GM10248 (cell line): ENCODE measurements at regions of chr3 and their contacts with region 1.

Region 1: DNA sequence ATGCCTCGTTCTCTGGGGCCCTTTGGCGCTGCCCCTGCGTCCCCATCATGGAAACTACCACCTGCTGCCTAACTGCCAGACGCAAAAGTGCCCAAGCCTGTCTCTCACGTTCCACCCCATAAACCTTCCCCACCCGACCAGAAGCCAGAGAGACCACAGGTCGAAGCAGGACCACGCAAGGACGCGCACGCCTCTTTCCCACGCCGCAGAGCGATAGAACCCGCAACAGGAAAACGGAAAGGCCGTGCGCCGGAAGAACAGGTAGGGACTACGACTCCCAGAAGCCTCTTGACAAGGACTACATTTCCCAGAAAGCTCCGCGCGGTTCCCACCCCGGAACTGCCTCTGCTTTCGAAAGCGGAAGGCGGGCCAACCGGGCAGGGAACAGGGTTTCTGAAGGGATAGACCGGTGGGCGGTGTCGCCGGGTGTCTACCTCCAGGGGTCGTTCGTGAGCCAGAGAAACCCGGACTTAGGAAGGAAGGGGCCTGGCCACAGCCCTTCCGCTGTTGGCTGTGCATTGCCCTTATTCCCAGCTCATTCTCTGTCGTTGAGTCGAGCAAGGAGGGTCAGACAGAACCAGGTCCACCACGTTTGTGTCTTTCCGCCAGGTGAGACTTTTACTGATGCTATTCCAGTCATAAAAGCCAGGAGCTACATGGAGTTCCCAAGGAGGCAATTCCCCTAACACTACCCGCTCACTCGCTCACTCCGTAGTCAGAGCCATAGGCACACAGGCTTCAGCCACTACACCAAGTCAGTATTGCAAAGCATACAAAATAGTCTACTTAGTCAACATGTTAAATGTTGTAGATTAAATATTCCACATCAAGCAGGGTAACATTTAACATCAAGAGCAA is 56.6 kb upstream of the ZBTB38 start:
- DNase-seq: peak; percentile 98
- CTCF ChIP-seq: peak; percentile 88

Region 2: GRCh38 chr3:140378571-140379340 is 933.0 kb before region 1 on chr3:
- CTCF ChIA-PET with region 1: no interaction called
- POLR2A ChIA-PET with region 1: no interaction called
- DNase-seq: no peak
- CTCF ChIP-seq: no peak

Region 3: DNA sequence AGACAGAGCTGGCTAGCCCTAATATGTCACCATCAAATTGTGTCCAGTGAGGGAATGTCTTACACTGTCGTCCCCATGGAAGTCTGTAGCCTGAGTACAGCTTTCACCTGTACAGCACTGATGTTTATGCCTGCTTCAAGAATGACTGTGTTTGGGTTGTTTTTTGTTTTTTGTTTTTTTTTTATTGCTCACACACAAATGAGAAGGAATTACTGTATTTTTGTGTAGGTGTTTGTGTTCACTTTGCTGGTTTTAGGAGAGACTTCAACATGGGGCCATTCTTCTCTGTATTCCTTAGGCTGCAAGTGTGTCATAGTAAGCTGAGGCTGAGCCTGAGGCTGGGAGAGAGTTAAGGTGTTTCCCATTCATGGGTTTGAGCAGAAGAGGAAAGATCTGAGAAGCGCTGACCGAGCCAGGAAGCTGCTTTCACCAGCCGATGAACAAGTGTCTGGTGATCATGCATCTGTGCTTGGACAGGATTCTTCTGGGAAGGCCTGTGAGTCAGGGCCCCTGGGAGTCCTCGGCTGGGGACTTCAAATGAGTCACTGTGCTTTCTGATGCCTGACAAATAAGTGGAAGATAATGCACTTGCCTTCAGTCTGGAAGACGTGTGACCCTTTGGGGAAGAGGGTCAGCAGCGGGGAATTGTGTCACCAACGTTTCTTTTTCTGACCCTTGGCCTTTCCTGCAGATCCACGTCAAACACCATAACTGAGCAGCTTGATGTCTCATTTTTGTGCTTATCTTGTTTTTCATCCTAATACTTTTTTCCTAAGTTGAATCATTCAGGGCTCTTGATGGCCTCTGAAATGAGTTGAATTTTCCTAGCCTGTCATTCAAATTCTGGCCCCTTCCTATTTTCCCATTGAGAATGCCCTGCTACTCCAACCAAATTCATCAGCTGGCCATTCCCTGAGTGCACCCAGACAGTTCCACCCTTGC is 19.9 kb after region 1 on chr3:
- CTCF ChIA-PET with region 1: interaction called, 30 read pairs
- POLR2A ChIA-PET with region 1: no interaction called
- DNase-seq: no peak
- CTCF ChIP-seq: no peak

Region 4: DNA sequence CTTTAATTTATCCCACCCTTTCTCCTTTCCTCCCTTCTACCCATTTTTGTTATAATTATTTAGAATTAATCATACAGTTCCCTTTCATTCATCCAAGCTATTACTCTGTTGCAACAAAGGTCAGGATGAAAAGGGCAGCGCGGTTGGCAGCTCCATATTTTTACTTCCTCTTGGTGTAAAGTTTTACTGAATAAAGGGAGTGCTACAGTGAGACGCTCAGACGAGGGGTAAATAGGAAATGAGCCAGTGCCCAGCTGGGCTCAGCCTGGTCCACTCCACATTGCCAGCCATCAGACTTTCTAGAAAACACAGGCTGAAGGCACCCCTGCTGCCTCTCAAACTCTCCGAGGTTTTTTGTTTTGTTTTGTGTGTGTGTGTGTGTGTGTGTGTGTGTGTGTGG is 34.7 kb after region 1 on chr3:
- CTCF ChIA-PET with region 1: interaction called, 15 read pairs
- POLR2A ChIA-PET with region 1: no interaction called
- DNase-seq: no peak
- CTCF ChIP-seq: no peak

Region 5: GRCh38 chr3:141386611-141387111 is 74.9 kb after region 1 on chr3:
- CTCF ChIA-PET with region 1: interaction called, 14 read pairs
- POLR2A ChIA-PET with region 1: no interaction called
- DNase-seq: no peak
- CTCF ChIP-seq: no peak

Region 6: DNA sequence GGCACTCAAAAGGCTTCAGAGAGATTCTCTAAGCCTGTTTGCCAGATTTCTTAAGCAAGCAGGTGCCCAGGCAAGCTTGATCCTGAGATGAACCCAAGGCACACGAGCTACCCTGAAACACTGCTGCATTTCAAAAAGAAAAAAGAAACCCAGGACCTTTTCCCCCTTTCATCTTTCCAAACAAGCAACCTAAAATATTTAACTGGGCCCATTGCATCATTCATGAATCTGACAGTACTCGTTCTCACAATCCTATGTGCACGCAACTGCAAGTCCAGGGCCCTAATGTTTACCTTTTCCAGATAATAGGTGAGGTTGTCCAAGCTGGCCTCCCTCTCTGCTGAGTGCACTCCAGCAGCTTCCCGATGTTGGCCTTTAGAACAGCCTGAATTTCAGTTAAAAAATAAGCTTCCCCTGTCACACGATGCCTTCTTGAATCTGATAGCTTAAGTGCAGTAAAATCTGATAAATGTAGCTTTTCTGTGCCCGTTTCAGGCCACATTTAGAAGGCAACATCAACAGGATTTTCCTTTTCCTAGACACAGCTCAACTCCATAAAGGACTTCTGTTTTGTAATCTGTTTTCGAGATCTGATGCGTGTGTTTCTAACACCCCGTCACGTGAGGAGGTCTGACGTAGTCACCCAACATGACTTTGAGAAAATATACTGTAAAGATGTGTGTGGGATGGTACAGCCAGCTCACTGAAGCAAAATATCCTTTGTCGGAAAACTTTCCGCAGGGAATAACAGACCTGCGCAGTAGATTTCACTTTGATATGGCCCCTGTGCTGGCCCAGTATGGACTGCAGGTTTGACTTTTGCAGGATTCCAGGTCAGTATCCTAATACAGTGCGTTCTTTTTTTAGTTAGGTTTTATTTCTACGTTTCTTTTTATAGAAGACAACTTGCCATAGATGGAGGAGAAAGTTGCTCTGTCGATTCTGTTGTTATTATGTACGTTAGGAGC is 120.0 kb after region 1 on chr3:
- CTCF ChIA-PET with region 1: interaction called, 12 read pairs
- POLR2A ChIA-PET with region 1: interaction called, 4 read pairs
- DNase-seq: no peak
- CTCF ChIP-seq: no peak

Region 7: DNA sequence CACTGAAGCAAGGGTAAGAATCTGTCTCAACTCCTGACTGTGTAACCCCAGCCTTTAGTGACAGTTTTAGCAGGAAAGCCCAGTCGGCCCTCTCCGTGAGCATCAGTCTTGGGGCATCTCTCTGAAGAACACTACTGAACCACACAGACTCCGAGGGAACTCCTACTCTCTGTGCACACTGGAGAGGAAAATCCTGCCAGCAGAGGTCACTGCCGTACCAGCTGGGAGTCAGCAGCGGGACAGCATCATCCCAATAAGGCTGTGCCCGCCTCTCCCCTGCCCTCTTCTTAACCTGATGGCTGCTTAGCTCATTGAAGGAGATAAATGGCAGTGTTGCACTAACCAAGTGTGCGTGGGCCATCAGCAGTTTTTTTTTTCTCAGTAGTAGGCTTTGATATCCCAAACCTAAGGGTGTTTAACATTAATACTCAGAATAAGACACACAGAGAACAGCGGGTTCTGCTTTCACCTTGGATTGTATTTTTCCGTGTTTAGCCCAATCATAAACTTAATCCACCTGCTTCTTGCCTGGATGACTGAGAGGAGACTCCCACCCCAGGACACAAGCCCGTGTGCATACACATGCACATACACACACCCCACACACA is 148.5 kb after region 1 on chr3:
- CTCF ChIA-PET with region 1: interaction called, 398 read pairs
- POLR2A ChIA-PET with region 1: no interaction called
- DNase-seq: peak; percentile 81
- CTCF ChIP-seq: peak; percentile 86

Region 8: DNA sequence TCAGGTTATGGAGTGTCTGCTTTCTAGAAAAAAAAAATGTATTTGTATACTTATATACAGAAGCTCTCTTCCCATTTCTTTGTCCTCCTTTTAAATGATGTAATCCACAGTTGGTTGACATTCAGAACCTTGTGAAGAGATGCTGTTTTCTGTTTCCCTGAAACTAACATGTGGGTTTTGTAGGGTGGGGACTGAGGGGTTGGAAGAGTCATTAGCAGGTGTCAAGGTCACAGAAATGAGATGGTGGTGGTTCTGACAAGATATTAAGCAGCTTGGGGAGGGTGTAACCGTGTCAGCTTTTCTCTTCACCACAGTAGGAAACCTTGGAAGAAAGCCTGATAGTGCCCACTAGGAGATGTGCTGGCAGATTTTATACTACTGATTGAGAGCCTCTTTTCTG is 177.5 kb after region 1 on chr3:
- CTCF ChIA-PET with region 1: no interaction called
- POLR2A ChIA-PET with region 1: no interaction called
- DNase-seq: no peak
- CTCF ChIP-seq: no peak